ENCODE measurements at regions of chr1 and their contacts with region 1.

Region 1: GRCh38 chr1:34113887-34114286 is 51.1 kb downstream of the CSMD2 start:
- DNase-seq: peak in 1 of 2 experiments; percentile 48
- H3K4me3 ChIP-seq: no peak overlapping the region
- H3K27ac ChIP-seq: no peak overlapping the region
- H3K4me1 ChIP-seq: 0 out of 7 replicates have a peak, but pooled peaks cover 0 to 3% (median 0%) of the 10 kb centered on the region in 4 experiments
- H3K27me3 ChIP-seq: no peaks in the 10 kb centered on the region
- CTCF ChIP-seq: peak in 2 of 3 experiments; percentile 59 to 60; a peak in 3 of 4 replicates
- EP300 ChIP-seq: no peak
- POLR2A ChIP-seq: no peak
- RAD21 ChIP-seq: peak; percentile 51 to 61

Region 2: GRCh38 chr1:33633019-33633801 is 480.7 kb before region 1 on chr1:
- CTCF ChIA-PET with region 1: interaction called, 13 read pairs
- POLR2A ChIA-PET with region 1: interaction called, 3 read pairs
- DNase-seq: peak; percentile 64 to 95
- H3K4me3 ChIP-seq: no peak overlapping the region
- H3K27ac ChIP-seq: no peak overlapping the region
- H3K4me1 ChIP-seq: peaks cover 10 to 18% (median 12%) of the 10 kb centered on the region in 4 experiments
- H3K27me3 ChIP-seq: peaks cover 0 to 2% (median 0%) of the 10 kb centered on the region in 4 experiments; a peak in 1 of 7 replicates
- CTCF ChIP-seq: peak; percentile 99 to 100 (median 100)
- EP300 ChIP-seq: no peak
- POLR2A ChIP-seq: no peak
- RAD21 ChIP-seq: peak; percentile 65 to 71

Region 3: DNA sequence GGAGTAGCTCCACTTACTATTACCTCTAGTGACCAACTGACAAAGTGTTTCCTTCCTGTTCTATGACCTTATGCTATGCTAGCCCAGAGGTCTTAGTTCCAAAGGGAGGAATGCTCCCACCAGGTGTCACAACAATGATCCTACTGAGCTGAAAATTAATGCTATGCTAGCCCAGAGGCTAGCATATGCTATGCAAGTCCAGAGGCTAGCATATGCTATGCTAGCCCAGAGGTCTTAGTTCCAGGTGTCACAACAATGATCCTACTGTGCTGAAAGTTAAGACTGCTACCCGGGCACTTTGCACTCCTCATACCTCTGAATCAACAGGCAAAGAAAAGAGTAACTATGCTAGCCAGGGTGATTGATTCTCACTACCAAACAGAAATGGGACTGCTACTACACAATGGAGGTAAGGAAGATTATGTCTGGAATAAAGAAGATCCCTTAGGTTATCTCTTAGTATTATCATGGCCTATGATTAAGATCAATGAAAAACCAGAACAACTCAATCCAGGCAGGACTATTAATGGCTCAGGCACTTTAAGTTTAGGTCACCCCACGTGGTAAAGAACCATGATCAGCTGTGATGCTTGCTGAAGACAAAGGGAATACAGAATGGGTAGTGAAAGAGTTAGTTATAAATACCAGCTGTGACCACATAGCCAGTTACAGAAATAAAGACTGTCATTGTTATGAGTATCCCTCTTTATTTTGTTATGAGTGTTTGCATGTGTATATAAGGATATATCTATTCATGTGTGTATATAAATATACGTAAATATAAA is 63.0 kb before region 1 on chr1:
- CTCF ChIA-PET with region 1: interaction called, 12 read pairs
- POLR2A ChIA-PET with region 1: no interaction called
- DNase-seq: no peak
- H3K4me3 ChIP-seq: no peak overlapping the region
- H3K27ac ChIP-seq: no peak overlapping the region
- H3K4me1 ChIP-seq: no peaks in the 10 kb centered on the region
- H3K27me3 ChIP-seq: no peaks in the 10 kb centered on the region
- CTCF ChIP-seq: no peak
- EP300 ChIP-seq: no peak
- POLR2A ChIP-seq: no peak
- RAD21 ChIP-seq: no peak

Region 4: DNA sequence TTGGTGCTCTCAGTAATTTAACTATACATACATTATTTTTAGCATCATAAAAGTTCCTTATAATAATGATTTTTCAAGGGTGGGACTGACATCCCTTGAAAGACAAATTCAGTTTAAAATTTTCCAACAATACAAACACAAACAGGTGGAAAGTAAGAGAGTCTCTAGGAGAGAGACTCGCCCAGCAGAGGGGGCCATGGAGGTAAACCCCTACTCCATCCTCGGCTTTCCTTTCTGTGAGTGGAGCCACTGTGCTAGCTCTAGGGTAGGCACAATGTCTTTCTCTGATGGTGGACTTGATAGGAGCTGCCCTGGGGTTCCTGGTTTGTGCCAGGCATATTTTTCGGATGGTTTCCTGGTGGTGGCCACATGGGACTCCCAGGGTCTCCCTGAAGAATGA is 42.9 kb after region 1 on chr1:
- CTCF ChIA-PET with region 1: interaction called, 24 read pairs
- POLR2A ChIA-PET with region 1: no interaction called
- DNase-seq: peak in 1 of 2 experiments; percentile 59
- H3K4me3 ChIP-seq: no peak overlapping the region
- H3K27ac ChIP-seq: no peak overlapping the region
- H3K4me1 ChIP-seq: peaks cover 0 to 2% (median 0%) of the 10 kb centered on the region in 4 experiments; a peak in 1 of 7 replicates
- H3K27me3 ChIP-seq: no peaks in the 10 kb centered on the region
- CTCF ChIP-seq: peak; percentile 36 to 57 (median 47); a peak in 3 of 4 replicates
- EP300 ChIP-seq: no peak
- POLR2A ChIP-seq: no peak
- RAD21 ChIP-seq: peak; percentile 51 to 56

Region 5: GRCh38 chr1:34162852-34163766 is 49.2 kb after region 1 on chr1:
- CTCF ChIA-PET with region 1: interaction called, 24 read pairs
- POLR2A ChIA-PET with region 1: interaction called, 8 read pairs
- DNase-seq: peak; percentile 86 to 87
- H3K4me3 ChIP-seq: peak overlapping the region; percentile 80 to 90 (median 82)
- H3K27ac ChIP-seq: no peak overlapping the region
- H3K4me1 ChIP-seq: peaks cover 4 to 18% (median 10%) of the 10 kb centered on the region in 4 experiments
- H3K27me3 ChIP-seq: no peaks in the 10 kb centered on the region
- CTCF ChIP-seq: peak; percentile 65 to 84 (median 77)
- EP300 ChIP-seq: no peak
- POLR2A ChIP-seq: no peak
- RAD21 ChIP-seq: peak; percentile 81 to 86

Region 6: GRCh38 chr1:34419663-34420136 is 305.8 kb after region 1 on chr1:
- CTCF ChIA-PET with region 1: interaction called, 10 read pairs
- POLR2A ChIA-PET with region 1: no interaction called
- DNase-seq: peak; percentile 39 to 57
- H3K4me3 ChIP-seq: no peak overlapping the region
- H3K27ac ChIP-seq: no peak overlapping the region
- H3K4me1 ChIP-seq: no peaks in the 10 kb centered on the region
- H3K27me3 ChIP-seq: no peaks in the 10 kb centered on the region; a peak in 1 of 7 replicates
- CTCF ChIP-seq: peak; percentile 54 to 79 (median 72)
- EP300 ChIP-seq: no peak
- POLR2A ChIP-seq: no peak
- RAD21 ChIP-seq: peak; percentile 82 to 85

Measured in H1 (cell line).